ENCODE measurements at regions of chr18 and their contacts with region 1.

Region 1: DNA sequence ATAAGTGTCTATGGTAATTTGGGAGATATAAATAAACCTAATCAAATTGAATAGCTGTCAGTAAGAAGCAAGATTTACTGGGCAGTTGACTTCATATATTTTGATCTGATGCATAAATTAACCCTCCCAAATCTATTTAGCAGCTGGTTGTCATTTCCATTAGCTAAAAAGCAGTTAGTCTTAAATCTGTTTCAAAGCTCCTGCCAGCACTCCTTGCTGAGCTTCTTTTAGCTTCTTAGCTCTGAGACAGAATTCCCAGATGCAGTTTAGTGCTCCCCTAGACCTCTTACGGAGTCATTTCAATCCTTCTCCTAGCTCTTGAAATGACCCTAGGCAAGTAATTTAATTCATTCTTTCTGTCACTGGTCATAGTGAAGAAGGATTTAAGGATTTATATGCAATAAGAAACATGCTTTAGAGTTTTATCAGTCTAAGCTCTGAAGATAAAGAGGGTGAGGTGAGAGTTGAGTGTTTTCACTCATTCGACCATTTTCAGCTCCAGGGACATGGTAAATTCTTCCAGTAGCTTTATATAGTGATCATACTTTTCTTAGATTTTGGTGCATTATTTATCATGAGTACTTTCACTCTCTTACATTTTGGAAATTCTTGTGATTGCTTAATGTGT is 98.9 kb downstream of the PHLPP1 start:
- DNase-seq: no peak
- ATAC-seq: no peak

Region 2: DNA sequence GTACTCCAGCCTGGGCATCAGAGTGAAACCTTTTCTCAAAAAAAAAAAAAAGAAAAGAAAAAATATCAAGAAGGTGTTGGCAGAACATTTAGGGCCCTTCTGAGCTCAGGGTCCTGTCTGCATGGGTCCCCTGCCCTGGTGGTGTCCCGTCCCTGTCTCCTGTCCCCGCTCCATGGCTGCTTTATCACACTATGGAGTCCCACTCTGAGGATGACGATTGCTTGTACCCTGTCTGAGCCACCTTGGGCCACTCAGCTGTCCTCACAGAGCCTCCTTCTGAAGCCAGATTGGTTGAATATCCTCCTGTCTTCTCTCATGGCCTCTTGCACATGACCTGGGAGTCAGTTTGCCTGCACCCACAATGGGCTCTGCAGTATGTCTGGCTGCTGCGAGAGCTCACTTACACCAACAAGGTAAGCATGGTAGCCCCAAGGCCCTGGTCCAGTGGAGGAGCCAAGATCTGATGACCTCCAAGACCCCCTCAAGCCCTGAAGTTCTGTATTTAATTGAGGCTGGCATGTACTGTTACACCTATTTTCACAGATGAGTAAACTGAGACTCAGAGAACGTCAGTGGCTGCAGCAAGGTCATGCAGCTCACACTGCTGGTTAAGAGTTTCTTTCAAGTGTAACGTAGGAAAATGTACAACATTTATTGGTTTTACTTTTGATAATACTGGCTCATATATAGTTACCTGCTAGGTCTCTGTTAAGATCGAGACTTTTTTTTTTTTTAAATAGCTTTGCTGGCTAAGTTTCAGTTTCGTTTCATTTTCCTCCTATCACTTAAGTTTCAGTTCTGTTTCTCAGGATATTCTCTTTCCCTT is 308.4 kb before region 1 on chr18:
- intact Hi-C with region 1: no loop called
- DNase-seq: no peak
- ATAC-seq: peak; percentile 14

Region 3: DNA sequence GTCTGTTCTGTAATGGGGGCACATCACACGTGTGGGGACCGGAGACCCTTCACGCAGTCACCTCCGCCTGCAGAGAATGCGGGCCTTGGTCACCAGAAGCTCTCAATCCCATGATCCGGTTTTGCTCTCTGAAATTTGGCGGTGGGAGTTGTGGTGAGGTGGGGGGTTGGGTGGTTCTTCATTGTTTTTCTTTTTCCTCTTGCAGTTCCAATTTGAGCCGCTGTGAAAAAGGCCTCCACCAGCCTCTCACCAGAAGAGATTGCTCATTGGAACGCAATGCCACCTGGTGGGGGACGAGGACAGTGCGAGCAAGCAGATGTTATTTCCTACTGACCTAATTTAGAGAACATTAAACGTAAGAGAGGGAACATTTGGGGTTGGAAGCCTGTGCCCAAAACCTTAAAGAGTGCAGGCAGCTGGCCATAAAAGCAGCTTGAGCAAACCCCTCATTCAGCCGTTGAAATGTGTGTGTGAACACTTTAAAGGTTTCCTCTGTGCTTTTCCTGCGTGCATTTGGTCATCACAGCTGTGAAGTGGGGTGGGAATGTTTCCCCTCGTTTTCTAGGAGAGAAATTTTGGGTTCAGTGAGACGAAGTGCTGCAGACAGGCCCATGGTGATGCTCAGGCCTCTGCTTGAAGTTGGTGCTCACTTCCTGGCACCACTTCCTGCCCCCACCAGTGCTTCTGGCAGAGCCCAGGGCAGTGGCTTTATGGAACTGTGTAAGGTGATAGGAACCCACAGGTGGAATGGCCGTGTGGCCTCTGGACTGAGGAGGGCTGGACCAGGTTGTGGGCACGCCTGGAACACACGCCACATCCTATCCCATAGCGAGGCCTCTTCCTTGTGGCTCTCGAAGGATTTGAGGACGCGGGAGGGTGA is 229.8 kb before region 1 on chr18:
- intact Hi-C with region 1: no loop called
- DNase-seq: peak; percentile 86
- ATAC-seq: peak; percentile 89

Region 4: DNA sequence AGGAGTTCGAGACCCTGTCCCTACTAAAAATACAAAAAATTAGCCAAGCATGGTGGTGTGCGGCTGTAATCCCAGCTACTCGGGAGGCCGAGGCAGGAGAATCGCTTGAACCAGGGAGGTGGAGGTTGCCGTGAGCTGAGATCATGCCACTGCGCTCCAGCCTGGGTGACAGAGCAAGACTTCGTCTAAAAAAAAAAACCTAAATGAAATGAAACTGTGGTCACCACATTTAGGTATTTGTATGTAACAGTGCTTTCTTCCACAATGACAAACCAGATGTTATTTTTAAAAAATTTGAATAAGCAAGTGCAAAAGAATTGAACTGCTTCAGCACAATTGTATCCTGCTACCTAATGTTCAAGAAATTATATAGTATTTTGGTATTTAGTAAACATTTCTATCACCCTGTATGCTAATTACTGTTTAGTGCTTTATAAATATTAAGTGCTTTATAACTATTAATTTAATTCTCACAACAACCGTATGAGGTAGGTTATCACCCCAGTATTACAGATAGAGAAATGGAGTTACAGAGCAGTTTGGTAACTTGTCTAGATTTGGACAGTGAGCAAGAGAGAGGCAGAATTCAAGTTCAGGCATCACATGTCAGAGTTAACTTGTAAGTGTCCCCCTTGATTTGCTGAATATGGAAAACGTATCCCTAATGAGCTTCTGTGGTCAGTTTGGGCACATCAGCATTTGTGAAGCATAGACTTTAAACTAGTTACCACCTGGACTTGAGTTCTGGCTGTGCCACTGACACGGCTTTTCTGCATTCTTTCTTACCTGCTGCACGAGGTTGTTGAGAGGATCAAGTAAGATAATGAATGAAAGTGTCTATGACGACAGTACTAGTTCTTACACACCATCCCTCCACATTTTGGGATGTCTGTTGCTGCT is 84.5 kb before region 1 on chr18:
- intact Hi-C with region 1: loop called (anchors 10 kb)
- DNase-seq: no peak
- ATAC-seq: no peak

Measured in left ventricle myocardium superior (tissue), 1 donor.